ENCODE measurements at regions of chr7 and their contacts with region 1.

Region 1: DNA sequence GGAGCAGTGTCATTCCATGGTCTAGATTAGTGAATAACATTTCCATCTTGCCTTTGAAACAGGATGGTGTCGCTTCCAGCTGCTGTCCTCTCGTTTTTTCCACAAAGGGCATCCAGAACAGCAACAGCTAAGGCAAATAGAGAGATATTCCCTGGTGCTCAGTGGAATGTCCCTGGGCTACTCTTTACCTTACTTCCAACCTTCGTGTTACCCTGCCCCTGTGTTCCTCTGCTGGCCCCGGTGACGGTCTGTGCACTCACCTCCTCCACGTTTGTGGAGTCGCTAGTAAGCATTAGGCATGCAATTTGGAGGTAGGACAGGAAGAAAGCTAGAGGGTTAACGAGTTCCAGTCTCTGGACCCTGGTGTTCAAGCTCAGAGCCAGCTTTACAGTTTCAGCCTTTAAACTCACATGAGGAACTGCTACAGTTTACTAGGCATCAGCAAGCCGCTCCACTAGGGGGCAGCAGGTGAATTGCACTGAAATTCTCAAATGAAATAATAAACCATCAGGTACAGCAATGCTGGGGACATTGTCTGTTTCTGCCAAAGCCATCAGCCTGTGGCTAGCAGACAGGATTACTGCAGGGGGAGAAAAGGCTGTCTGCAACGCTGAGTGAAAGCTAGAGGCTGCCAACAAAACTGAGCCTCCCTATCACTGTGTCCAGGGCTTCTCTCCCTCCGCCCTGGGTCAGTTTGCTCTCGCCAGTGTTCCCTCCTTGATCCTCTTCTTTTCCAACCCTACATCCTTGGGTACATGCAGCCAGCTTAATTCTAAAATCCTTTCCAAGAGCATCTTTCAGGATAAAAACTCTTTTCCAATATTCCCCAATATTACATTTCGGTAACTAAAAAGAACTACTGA is 9.0 kb downstream of the MRPL32 start:
- DNase-seq: peak; percentile 76
- H3K4me3 Mint-ChIP-seq: no peak overlapping the region
- H3K27ac Mint-ChIP-seq: no peak overlapping the region
- H3K4me1 Mint-ChIP-seq: no peaks in the 10 kb centered on the region
- H3K27me3 Mint-ChIP-seq: no peaks in the 10 kb centered on the region
- CTCF ChIP-seq: peak; percentile 89

Region 2: DNA sequence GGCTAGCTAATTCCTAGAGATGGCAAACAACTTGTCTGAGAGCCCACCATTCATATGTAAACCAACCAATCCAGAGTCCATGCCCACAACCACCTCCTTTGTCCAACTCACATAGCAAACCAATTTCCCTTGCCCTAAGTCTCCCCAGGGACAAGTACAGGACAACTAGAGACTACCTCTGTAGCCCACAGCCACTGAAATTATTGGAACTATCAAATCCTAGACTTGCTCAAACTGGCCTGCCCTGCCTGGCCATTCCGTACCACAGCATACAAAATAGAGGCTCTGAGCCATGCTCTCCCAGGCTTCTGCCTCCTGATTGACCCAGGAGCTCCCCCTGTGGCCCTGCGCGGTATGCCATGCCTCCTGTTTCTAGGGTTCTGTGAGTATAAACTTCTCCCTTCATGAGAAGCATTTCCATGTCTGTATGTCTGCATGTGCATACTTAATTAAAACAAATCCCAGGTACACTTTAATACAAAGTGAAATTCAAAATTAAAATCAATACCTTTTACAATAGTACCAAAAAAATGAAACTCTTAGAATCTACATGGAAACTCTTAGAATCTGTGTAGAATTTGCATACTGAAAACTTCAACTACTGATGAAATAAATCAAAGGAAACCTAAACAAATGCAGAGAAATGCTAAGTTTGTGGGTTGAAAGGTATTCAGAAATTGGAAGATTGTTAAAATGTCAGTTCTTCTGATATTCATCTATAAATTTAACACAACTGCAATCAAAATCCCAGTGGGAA is 167.2 kb after region 1 on chr7:
- CTCF ChIA-PET with region 1: interaction called, 5 read pairs
- POLR2A ChIA-PET with region 1: no interaction called
- intact Hi-C with region 1: loop called (anchors 2 kb)
- DNase-seq: peak; percentile 78
- H3K4me3 Mint-ChIP-seq: no peak overlapping the region
- H3K27ac Mint-ChIP-seq: no peak overlapping the region
- H3K4me1 Mint-ChIP-seq: no peaks in the 10 kb centered on the region
- H3K27me3 Mint-ChIP-seq: peaks cover 30% of the 10 kb centered on the region
- CTCF ChIP-seq: peak; percentile 91

Region 3: DNA sequence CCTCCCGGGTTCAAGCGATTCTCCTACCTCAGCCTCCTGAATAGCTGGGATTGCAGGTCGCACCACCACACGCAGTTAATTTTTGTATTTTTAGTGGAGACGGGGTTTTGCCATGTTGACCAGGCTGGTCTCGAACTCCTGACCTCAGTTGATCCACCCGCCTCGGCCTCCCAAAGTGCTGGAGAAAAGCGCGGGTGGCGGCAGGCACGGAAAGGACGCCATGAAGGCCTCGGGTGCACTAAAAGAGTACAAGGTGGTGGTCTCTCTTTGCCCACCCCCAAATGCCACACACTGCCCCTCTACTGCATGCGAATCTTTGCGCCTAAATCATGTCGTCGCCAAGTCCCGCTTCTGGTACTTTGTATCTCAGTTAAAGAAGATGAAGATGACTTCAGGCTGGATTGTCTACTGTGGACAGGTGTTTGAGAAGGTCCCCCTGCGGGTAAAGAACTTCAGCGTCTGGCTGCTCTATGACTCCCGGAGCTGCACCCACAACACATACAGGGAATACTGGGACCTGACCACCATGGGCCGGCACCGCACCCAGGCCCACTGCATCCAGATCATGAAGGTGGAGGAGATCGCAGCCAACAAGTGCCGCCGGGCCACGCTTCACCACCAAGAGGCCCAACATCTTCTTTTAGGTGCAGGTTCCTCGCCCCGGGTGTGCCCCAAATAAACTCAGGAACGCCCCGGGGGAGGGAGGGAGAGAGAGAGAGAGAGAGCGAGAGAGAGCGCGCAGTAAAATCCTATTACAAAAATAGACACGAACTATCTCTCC is 332.9 kb after region 1 on chr7:
- CTCF ChIA-PET with region 1: interaction called, 11 read pairs
- POLR2A ChIA-PET with region 1: no interaction called
- intact Hi-C with region 1: no loop called
- DNase-seq: no peak
- H3K4me3 Mint-ChIP-seq: no peak overlapping the region
- H3K27ac Mint-ChIP-seq: no peak overlapping the region
- H3K4me1 Mint-ChIP-seq: peaks cover 7% of the 10 kb centered on the region
- H3K27me3 Mint-ChIP-seq: no peaks in the 10 kb centered on the region
- CTCF ChIP-seq: no peak

Region 4: GRCh38 chr7:43454936-43455518 is 513.8 kb after region 1 on chr7:
- CTCF ChIA-PET with region 1: interaction called, 47 read pairs
- POLR2A ChIA-PET with region 1: no interaction called
- intact Hi-C with region 1: loop called (anchors 1 kb)
- DNase-seq: peak; percentile 71
- H3K4me3 Mint-ChIP-seq: no peak overlapping the region
- H3K27ac Mint-ChIP-seq: no peak overlapping the region
- H3K4me1 Mint-ChIP-seq: peaks cover 6% of the 10 kb centered on the region
- H3K27me3 Mint-ChIP-seq: no peaks in the 10 kb centered on the region
- CTCF ChIP-seq: peak; percentile 48